Activated CD8-positive, alpha-beta T cell treated with anti-CD3 and anti-CD28 coated beads, Interleukin-2, amount 10 ng/mL, durations not matched to agents 7 days and 5 days (primary cell): ENCODE measurements at regions of chr5 and their contacts with region 1.

Region 1: DNA sequence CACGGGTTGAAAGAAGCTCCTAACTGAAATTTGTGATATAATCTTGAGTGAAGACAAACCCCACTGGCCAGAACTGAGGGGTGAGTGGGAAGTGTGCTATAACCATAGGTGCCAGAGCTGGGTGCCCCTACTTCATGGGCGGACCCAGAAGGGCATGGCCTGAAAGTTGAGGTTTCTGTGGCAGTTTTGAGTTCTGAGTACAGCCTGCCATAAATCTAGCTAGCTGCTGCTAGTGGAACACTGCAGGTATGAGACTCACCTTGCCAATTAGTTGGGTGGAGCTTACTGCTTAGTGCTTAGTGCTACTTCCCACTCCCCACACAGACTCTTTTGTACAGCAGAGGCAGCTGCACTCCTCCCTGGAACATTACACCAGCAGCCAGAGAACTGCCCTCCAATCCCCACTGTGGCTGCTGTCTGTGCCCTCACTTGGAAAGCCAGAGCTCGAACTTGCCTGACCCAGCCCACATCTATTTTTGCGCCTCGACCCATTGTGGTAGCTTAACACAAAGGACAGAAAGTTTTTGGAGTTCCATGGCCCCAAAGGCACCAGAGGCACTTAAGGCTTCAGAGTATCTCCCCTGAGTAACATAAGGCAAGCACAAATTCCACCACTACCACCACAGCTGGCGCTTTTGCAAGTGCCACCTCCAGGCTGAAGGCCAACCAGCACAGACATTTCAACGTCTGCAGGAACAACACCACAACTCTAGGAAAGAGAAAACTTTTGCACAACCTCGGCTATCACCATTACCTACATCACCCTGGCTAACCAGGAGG is 27.1 kb upstream of the PTGER4 start:
- DNase-seq: peak; percentile 58
- ATAC-seq: peak; percentile 53
- H3K4me3 Mint-ChIP-seq: peak overlapping the region; percentile 81
- H3K27ac Mint-ChIP-seq: peak overlapping the region; percentile 90
- H3K4me1 Mint-ChIP-seq: peaks cover 86% of the 10 kb centered on the region
- H3K27me3 Mint-ChIP-seq: no peaks in the 10 kb centered on the region

Region 2: DNA sequence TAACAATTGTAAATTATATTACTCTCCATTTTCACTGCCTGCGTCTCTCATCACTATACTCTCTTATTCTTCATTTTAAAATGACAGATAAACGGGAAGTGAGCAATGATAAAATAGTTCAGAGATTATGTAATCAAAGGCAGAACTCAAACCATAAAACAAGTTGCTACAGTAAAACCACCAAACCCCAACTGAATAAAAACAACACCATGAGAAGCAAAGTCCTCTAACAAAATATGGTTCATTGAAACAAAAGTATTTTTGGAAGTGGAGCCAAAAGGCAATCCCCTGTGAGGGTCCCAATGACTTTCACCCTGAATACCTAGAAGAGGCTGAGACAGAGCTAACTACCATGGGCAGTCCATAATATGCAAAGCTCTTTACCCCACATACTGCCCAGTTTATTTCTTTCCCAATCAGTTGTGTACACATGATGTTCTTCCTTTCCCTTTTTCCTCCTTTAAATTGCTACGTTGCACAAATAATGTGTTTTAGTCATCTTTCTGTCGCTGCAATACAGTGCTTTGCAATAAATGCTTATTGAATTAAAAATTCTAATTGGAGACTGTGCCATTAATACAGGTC is 37.0 kb before region 1 on chr5:
- CTCF ChIA-PET with region 1: interaction called, 13 read pairs
- POLR2A ChIA-PET with region 1: no interaction called
- DNase-seq: no peak
- ATAC-seq: no peak
- H3K4me3 Mint-ChIP-seq: no peak overlapping the region
- H3K27ac Mint-ChIP-seq: peak overlapping the region; percentile 7
- H3K4me1 Mint-ChIP-seq: peaks cover 13% of the 10 kb centered on the region
- H3K27me3 Mint-ChIP-seq: no peaks in the 10 kb centered on the region

Region 3: DNA sequence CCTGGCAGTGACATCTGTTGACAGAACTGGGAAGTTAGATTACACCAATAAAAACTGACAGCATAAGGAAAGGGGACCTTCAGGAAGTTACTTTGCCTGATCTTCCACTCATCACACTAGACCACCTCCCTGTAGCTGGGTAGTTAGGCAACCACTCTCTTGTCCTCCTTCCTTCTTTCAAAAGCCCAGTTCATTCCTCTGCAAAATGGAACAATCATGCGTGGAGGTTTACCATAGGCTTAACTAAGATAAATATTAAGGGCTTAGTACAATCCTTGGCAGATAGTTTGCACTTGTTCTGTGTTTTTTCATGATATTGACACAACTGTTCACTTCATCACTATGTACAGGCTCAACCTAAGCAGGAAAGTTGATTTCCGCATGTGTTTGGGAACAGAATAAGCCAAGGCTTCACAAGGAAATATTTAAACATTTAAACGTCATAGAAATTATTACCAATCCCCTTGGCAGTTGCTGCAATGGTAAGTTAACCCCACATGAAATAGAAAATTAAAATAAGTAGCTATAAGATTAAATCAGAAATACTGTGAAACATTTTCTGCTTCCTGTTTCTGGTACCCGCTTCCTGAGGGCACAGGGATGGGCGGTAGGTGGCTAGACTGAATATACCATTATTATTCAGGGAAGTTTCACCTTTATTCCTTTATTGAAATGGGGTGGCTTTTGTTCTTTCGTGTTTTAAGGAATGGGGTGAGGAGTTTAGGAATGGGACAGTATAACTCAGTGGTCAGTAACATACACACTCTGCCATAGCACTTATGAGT is 17.2 kb after region 1 on chr5:
- CTCF ChIA-PET with region 1: interaction called, 5 read pairs
- POLR2A ChIA-PET with region 1: interaction called, 18 read pairs
- DNase-seq: no peak
- ATAC-seq: peak; percentile 29
- H3K4me3 Mint-ChIP-seq: no peak overlapping the region
- H3K27ac Mint-ChIP-seq: no peak overlapping the region
- H3K4me1 Mint-ChIP-seq: peaks cover 47% of the 10 kb centered on the region
- H3K27me3 Mint-ChIP-seq: peaks cover 1% of the 10 kb centered on the region